ENCODE measurements at regions of chr6 and their contacts with region 1.

Region 1: DNA sequence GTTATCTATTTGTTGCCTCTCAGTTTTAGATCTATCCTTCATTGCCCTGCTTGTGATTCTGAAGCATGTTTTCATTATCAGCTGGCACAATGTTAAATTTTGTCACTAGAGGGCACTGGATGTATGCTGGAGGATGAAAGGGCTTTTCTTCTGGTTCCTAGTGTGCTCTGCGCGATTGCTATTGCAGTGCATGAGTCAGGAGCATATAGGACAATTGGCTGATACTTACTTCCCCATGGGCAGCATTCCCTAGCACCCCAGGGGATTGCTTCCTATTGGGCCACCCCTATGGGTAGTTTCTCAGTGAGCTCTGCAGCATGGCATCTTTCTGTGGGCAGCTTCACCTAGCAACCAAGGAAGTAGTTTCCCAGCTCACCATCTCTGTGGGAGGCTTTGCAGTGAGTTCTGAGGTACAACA is 280.3 kb upstream of the SYNCRIP start:
- DNase-seq: peak in 1 of 9 donors; percentile 14
- ATAC-seq: peak; percentile 44
- H3K4me3 ChIP-seq: no peak overlapping the region
- H3K4me3 Mint-ChIP-seq: no peak overlapping the region
- H3K27ac ChIP-seq: no peak overlapping the region
- H3K27ac Mint-ChIP-seq: no peak overlapping the region
- H3K4me1 ChIP-seq: no peaks in the 10 kb centered on the region
- H3K4me1 Mint-ChIP-seq: no peaks in the 10 kb centered on the region
- H3K27me3 ChIP-seq: no peaks in the 10 kb centered on the region
- H3K27me3 Mint-ChIP-seq: peaks cover 0 to 6% (median 4%) of the 10 kb centered on the region in 5 donors

Region 2: DNA sequence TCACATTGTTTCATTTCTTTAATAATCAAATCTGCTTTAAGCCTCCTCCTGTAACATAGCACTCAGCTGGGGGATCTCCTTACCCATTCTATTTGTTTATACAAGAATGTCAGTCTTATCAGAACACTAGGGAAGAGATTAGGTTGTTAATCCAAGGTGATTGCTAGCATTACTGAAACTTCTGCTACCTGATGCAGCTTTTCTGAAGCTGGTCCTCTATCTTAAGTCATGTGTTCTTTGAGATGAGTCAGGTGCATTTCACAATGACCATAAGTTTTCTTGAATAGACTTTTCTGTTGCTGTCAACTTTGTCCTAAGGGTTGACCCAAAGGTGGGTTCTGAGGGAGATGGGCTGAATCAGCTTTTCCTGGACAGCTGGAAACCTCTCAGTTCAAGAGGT is 219.6 kb before region 1 on chr6:
- CTCF ChIA-PET with region 1: no interaction called
- POLR2A ChIA-PET with region 1: no interaction called
- intact Hi-C with region 1: no loop called
- DNase-seq: no peak
- ATAC-seq: no peak
- H3K4me3 ChIP-seq: no peak overlapping the region
- H3K4me3 Mint-ChIP-seq: no peak overlapping the region
- H3K27ac ChIP-seq: no peak overlapping the region
- H3K27ac Mint-ChIP-seq: no peak overlapping the region
- H3K4me1 ChIP-seq: no peaks in the 10 kb centered on the region
- H3K4me1 Mint-ChIP-seq: peaks cover 0 to 2% (median 0%) of the 10 kb centered on the region in 7 donors
- H3K27me3 ChIP-seq: no peaks in the 10 kb centered on the region
- H3K27me3 Mint-ChIP-seq: peaks cover 0 to 12% (median 5%) of the 10 kb centered on the region in 5 donors

Region 3: DNA sequence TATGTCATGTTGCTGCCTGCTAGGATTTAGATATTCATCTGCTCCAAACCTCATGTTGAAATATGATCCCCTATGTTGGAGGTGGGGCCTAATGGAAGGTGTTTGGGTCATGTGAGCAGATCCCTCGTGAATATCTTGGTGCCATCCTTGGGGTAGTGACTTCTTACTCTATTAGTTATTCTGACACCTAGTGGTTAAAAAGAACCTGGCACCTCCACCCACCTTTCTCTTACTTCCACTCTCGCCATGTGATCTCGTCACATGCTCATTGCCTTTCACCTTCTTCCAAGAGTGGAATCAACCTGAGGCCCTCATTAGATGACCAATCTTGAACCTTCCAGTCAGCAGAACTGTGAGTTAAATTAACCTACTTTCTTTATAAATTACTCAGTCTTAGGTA is 269.1 kb after region 1 on chr6:
- CTCF ChIA-PET with region 1: no interaction called
- POLR2A ChIA-PET with region 1: no interaction called
- intact Hi-C with region 1: loop called in 1 of 2 experiments (anchors 5 kb)
- DNase-seq: no peak
- ATAC-seq: no peak
- H3K4me3 ChIP-seq: no peak overlapping the region
- H3K4me3 Mint-ChIP-seq: no peak overlapping the region
- H3K27ac ChIP-seq: no peak overlapping the region
- H3K27ac Mint-ChIP-seq: no peak overlapping the region
- H3K4me1 ChIP-seq: no peaks in the 10 kb centered on the region
- H3K4me1 Mint-ChIP-seq: peaks cover 0 to 2% (median 0%) of the 10 kb centered on the region in 7 donors
- H3K27me3 ChIP-seq: no peaks in the 10 kb centered on the region
- H3K27me3 Mint-ChIP-seq: no peaks in the 10 kb centered on the region

Region 4: GRCh38 chr6:86856937-86857563 is 934.0 kb after region 1 on chr6:
- CTCF ChIA-PET with region 1: no interaction called
- POLR2A ChIA-PET with region 1: no interaction called
- intact Hi-C with region 1: loop called in 1 of 2 experiments (anchors 2 kb)
- DNase-seq: peak in 1 of 9 donors; percentile 2
- ATAC-seq: no peak
- H3K4me3 ChIP-seq: no peak overlapping the region
- H3K4me3 Mint-ChIP-seq: no peak overlapping the region
- H3K27ac ChIP-seq: no peak overlapping the region
- H3K27ac Mint-ChIP-seq: no peak overlapping the region
- H3K4me1 ChIP-seq: no peaks in the 10 kb centered on the region
- H3K4me1 Mint-ChIP-seq: no peaks in the 10 kb centered on the region
- H3K27me3 ChIP-seq: no peaks in the 10 kb centered on the region
- H3K27me3 Mint-ChIP-seq: peaks cover 0 to 5% (median 0%) of the 10 kb centered on the region in 5 donors

Region 5: GRCh38 chr6:87029711-87030314 is 1106.8 kb after region 1 on chr6:
- CTCF ChIA-PET with region 1: no interaction called
- POLR2A ChIA-PET with region 1: no interaction called
- intact Hi-C with region 1: loop called in 1 of 2 experiments (anchors 5 kb)
- DNase-seq: peak in 1 of 9 donors; percentile 1
- ATAC-seq: no peak
- H3K4me3 ChIP-seq: no peak overlapping the region
- H3K4me3 Mint-ChIP-seq: no peak overlapping the region
- H3K27ac ChIP-seq: no peak overlapping the region
- H3K27ac Mint-ChIP-seq: no peak overlapping the region
- H3K4me1 ChIP-seq: no peaks in the 10 kb centered on the region
- H3K4me1 Mint-ChIP-seq: no peaks in the 10 kb centered on the region
- H3K27me3 ChIP-seq: no peaks in the 10 kb centered on the region
- H3K27me3 Mint-ChIP-seq: peaks cover 3 to 24% (median 9%) of the 10 kb centered on the region in 5 donors

Measured in naive thymus-derived CD4-positive, alpha-beta T cell (primary cell).